B cell (primary cell): ENCODE measurements at regions of chr20 and their contacts with region 1.

Region 1: GRCh38 chr20:8487696-8488095 is 355.6 kb downstream of the PLCB1 start:
- DNase-seq: no peak
- ATAC-seq: no peak
- H3K4me3 ChIP-seq: no peak overlapping the region
- H3K4me3 Mint-ChIP-seq: no peak overlapping the region
- H3K27ac ChIP-seq: no peak overlapping the region
- H3K27ac Mint-ChIP-seq: no peak overlapping the region
- H3K4me1 ChIP-seq: no peaks in the 10 kb centered on the region
- H3K4me1 Mint-ChIP-seq: no peaks in the 10 kb centered on the region
- H3K27me3 ChIP-seq: no peaks in the 10 kb centered on the region
- H3K27me3 Mint-ChIP-seq: no peaks in the 10 kb centered on the region
- CTCF ChIP-seq: no peak

Region 2: GRCh38 chr20:7856756-7857155 is 630.9 kb before region 1 on chr20:
- CTCF ChIA-PET with region 1: no interaction called
- POLR2A ChIA-PET with region 1: no interaction called
- intact Hi-C with region 1: no loop called
- DNase-seq: no peak
- ATAC-seq: no peak
- H3K4me3 ChIP-seq: no peak overlapping the region
- H3K4me3 Mint-ChIP-seq: no peak overlapping the region
- H3K27ac ChIP-seq: no peak overlapping the region
- H3K27ac Mint-ChIP-seq: no peak overlapping the region
- H3K4me1 ChIP-seq: no peaks in the 10 kb centered on the region
- H3K4me1 Mint-ChIP-seq: no peaks in the 10 kb centered on the region
- H3K27me3 ChIP-seq: no peaks in the 10 kb centered on the region
- H3K27me3 Mint-ChIP-seq: no peaks in the 10 kb centered on the region
- CTCF ChIP-seq: no peak

Region 3: GRCh38 chr20:8464368-8464767 is 23.3 kb before region 1 on chr20:
- CTCF ChIA-PET with region 1: interaction called, 3 read pairs
- POLR2A ChIA-PET with region 1: no interaction called
- intact Hi-C with region 1: loop called (anchors 1 kb)
- DNase-seq: no peak
- ATAC-seq: no peak
- H3K4me3 ChIP-seq: no peak overlapping the region
- H3K4me3 Mint-ChIP-seq: no peak overlapping the region
- H3K27ac ChIP-seq: no peak overlapping the region
- H3K27ac Mint-ChIP-seq: no peak overlapping the region
- H3K4me1 ChIP-seq: no peaks in the 10 kb centered on the region
- H3K4me1 Mint-ChIP-seq: no peaks in the 10 kb centered on the region
- H3K27me3 ChIP-seq: no peaks in the 10 kb centered on the region
- H3K27me3 Mint-ChIP-seq: no peaks in the 10 kb centered on the region
- CTCF ChIP-seq: no peak

Region 4: DNA sequence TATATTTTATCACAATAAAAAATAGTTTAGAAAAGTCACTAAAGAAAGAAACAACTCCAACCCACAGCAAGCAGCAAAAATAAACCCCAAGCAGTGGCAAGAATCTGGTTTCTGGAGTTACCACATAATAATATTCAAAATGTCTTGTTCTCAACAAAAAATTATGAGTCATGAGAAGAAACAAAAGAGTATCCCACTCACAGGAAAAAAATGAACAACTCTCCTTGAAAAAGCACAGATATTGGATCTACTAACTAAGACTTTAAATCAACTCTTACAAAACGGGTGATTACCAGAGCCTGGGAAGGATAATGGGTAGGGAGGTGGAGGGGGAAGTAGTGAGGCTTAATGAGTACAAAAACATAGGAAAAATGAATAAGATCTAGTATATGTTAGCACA is 70.0 kb after region 1 on chr20:
- CTCF ChIA-PET with region 1: no interaction called
- POLR2A ChIA-PET with region 1: no interaction called
- intact Hi-C with region 1: no loop called
- DNase-seq: no peak
- ATAC-seq: no peak
- H3K4me3 ChIP-seq: no peak overlapping the region
- H3K4me3 Mint-ChIP-seq: no peak overlapping the region
- H3K27ac ChIP-seq: no peak overlapping the region
- H3K27ac Mint-ChIP-seq: no peak overlapping the region
- H3K4me1 ChIP-seq: no peaks in the 10 kb centered on the region
- H3K4me1 Mint-ChIP-seq: no peaks in the 10 kb centered on the region
- H3K27me3 ChIP-seq: no peaks in the 10 kb centered on the region
- H3K27me3 Mint-ChIP-seq: no peaks in the 10 kb centered on the region
- CTCF ChIP-seq: no peak

Region 5: GRCh38 chr20:8860011-8860495 is 372.4 kb after region 1 on chr20:
- CTCF ChIA-PET with region 1: no interaction called
- POLR2A ChIA-PET with region 1: no interaction called
- intact Hi-C with region 1: no loop called
- DNase-seq: no peak
- ATAC-seq: no peak
- H3K4me3 ChIP-seq: no peak overlapping the region
- H3K4me3 Mint-ChIP-seq: no peak overlapping the region
- H3K27ac ChIP-seq: no peak overlapping the region
- H3K27ac Mint-ChIP-seq: no peak overlapping the region
- H3K4me1 ChIP-seq: no peaks in the 10 kb centered on the region
- H3K4me1 Mint-ChIP-seq: no peaks in the 10 kb centered on the region
- H3K27me3 ChIP-seq: no peaks in the 10 kb centered on the region
- H3K27me3 Mint-ChIP-seq: no peaks in the 10 kb centered on the region
- CTCF ChIP-seq: no peak